ENCODE measurements at regions of chr18 and their contacts with region 1.

Region 1: GRCh38 chr18:35029770-35030169 is 11.4 kb upstream of the MAPRE2 start:
- DNase-seq: no peak

Region 2: DNA sequence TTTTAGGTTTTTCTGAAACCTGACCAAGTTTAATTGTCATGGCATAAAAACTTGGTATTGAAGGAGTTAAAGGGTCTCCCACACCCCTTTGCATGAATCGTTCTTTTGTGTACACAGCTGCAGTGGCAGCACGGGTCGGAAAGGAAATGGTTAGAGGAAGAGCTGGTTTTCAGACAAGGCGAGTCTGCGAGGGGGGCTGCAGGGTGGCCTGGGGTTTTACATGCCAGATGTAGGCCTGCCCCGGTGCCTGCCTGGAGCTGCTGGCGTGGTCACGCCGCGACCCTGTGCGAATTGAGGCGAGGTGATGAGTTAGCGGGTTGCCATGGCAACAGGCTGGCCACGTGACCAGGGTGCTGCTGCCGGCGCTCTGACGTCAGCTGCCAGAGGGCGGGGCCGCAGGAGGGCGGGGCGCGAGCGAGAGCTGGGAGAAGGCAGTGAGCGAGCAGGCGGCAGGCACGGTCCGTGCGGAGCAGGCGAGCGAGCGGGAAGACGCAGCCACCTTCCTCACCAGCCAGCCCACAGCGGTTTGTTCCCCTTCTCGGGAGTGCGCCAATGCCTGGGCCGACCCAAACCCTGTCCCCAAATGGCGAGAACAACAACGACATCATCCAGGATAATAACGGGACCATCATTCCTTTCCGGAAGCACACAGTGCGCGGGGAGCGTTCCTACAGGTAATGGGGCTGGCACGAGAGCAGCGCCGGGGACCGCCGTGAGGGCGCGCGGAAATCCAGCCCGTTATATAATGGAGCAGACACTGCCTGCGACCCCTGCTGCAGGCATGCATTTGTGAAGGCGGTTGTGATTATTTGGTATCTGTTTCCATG is 11.4 kb after region 1 on chr18 and contains the start of gene MAPRE2:
- CTCF ChIA-PET with region 1: interaction called, 10 read pairs
- POLR2A ChIA-PET with region 1: interaction called, 18 read pairs
- DNase-seq: peak; percentile 100

Region 3: GRCh38 chr18:35050028-35050546 is 20.3 kb after region 1 on chr18:
- CTCF ChIA-PET with region 1: interaction called, 10 read pairs
- POLR2A ChIA-PET with region 1: interaction called, 3 read pairs
- DNase-seq: no peak

Region 4: GRCh38 chr18:35143622-35144596 is 114.1 kb after region 1 on chr18:
- CTCF ChIA-PET with region 1: interaction called, 15 read pairs
- POLR2A ChIA-PET with region 1: no interaction called
- DNase-seq: peak; percentile 87